Activated CD4-positive, alpha-beta memory T cell treated with anti-CD3 and anti-CD28 coated beads for 36 hours (primary cell): ENCODE measurements at regions of chr3 and their contacts with region 1.

Region 1: DNA sequence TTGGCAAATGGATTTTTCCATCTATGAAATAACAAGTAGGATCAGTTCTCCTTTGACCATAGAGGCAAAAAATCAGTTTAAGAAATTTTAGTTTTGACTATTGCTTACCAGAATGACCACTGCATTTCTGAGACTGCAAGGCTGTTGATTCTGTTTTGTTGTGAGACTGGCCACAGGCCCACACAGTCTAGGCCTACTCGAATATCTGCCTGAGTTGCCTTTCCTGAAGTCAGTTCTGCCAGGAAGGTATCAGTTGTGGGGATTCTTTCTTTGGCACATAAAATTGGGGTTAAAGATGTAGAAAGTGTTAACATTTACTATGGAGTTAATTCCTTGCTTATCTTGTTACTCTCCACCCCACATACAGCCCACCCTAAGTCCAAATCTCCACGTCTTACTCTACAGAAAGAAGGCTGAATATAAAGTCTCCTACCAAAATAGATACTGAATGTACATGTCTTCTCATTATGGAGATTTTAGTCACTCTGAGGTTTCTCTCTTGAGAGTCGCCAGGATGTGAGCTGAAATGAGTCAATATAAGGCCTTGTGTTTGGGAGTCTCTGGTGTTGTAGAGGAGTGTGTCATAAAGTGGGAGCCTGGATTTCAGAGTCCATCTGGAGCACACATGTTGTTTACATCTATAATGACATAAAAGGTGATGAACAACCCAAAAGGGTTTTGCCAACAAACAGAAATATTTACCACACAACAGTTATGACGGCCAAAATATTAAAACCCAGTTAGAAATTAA is 45.0 kb upstream of the WWTR1 start:
- DNase-seq: peak; percentile 28
- H3K4me3 Mint-ChIP-seq: peak overlapping the region; percentile 16
- H3K27ac Mint-ChIP-seq: peak overlapping the region; percentile 81
- H3K4me1 Mint-ChIP-seq: peaks cover 33% of the 10 kb centered on the region
- H3K27me3 Mint-ChIP-seq: no peaks in the 10 kb centered on the region

Region 2: DNA sequence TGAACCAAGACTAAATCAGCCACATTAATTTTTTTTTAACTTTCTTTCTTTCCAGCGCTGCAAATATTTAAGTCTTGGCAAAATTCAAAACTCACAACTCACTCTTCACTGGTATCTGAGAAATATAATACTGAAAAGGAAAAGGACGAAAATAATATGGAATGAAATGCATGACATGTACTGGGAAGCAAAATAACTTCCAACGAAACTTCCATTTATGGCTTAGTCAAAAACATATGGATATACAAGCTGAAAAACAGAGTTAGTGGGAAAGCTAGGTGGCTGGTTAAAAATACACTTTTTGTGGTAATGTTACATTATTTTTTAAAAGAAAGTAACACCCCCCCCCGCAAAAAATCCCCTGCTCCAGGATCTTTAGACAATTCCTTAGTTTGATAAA is 142.2 kb before region 1 on chr3:
- CTCF ChIA-PET with region 1: no interaction called
- POLR2A ChIA-PET with region 1: no interaction called
- intact Hi-C with region 1: no loop called
- DNase-seq: no peak
- H3K4me3 Mint-ChIP-seq: no peak overlapping the region
- H3K27ac Mint-ChIP-seq: no peak overlapping the region
- H3K4me1 Mint-ChIP-seq: no peaks in the 10 kb centered on the region
- H3K27me3 Mint-ChIP-seq: peaks cover 11% of the 10 kb centered on the region

Region 3: GRCh38 chr3:149575961-149576564 is 126.8 kb before region 1 on chr3:
- CTCF ChIA-PET with region 1: no interaction called
- POLR2A ChIA-PET with region 1: no interaction called
- intact Hi-C with region 1: loop called (anchors 1 kb)
- DNase-seq: peak; percentile 43
- H3K4me3 Mint-ChIP-seq: no peak overlapping the region
- H3K27ac Mint-ChIP-seq: no peak overlapping the region
- H3K4me1 Mint-ChIP-seq: peaks cover 38% of the 10 kb centered on the region
- H3K27me3 Mint-ChIP-seq: peaks cover 11% of the 10 kb centered on the region

Region 4: GRCh38 chr3:149621218-149622005 is 81.5 kb before region 1 on chr3:
- CTCF ChIA-PET with region 1: interaction called, 3 read pairs
- POLR2A ChIA-PET with region 1: no interaction called
- intact Hi-C with region 1: loop called (anchors 1 kb)
- DNase-seq: peak; percentile 13
- H3K4me3 Mint-ChIP-seq: no peak overlapping the region
- H3K27ac Mint-ChIP-seq: no peak overlapping the region
- H3K4me1 Mint-ChIP-seq: peaks cover 15% of the 10 kb centered on the region
- H3K27me3 Mint-ChIP-seq: peaks cover 3% of the 10 kb centered on the region

Region 5: GRCh38 chr3:149646181-149646766 is 56.6 kb before region 1 on chr3:
- CTCF ChIA-PET with region 1: no interaction called
- POLR2A ChIA-PET with region 1: no interaction called
- intact Hi-C with region 1: no loop called
- DNase-seq: no peak
- H3K4me3 Mint-ChIP-seq: no peak overlapping the region
- H3K27ac Mint-ChIP-seq: no peak overlapping the region
- H3K4me1 Mint-ChIP-seq: no peaks in the 10 kb centered on the region
- H3K27me3 Mint-ChIP-seq: peaks cover 7% of the 10 kb centered on the region

Region 6: DNA sequence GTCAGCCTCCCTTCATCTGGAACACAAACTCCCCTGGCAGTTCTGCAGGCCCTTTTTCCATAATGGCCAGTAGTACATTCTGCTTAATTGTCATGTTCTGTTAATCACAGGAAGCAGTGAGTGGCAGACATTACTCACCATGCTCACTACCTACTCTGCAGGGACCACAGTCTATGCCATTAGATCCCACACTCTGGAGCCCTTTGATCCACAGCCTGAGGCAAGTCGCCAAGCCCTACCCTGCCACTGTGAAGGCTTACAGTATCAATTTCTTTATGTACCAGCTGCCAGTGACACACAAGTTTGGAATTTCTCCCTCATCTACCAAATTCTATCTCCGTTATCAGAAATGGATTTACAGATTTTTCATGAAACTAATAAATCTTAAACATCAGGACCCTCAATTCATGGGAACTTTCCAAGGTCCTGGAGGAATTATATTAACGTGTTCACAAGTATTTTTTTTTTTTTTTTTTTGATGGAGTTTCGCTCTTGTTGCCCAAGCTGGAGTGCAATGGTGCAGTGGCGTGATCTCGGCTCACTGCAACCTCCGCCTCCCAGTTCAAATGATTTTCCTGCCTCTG is 24.4 kb before region 1 on chr3:
- CTCF ChIA-PET with region 1: no interaction called
- POLR2A ChIA-PET with region 1: no interaction called
- intact Hi-C with region 1: no loop called
- DNase-seq: no peak
- H3K4me3 Mint-ChIP-seq: no peak overlapping the region
- H3K27ac Mint-ChIP-seq: no peak overlapping the region
- H3K4me1 Mint-ChIP-seq: no peaks in the 10 kb centered on the region
- H3K27me3 Mint-ChIP-seq: peaks cover 3% of the 10 kb centered on the region

Region 7: DNA sequence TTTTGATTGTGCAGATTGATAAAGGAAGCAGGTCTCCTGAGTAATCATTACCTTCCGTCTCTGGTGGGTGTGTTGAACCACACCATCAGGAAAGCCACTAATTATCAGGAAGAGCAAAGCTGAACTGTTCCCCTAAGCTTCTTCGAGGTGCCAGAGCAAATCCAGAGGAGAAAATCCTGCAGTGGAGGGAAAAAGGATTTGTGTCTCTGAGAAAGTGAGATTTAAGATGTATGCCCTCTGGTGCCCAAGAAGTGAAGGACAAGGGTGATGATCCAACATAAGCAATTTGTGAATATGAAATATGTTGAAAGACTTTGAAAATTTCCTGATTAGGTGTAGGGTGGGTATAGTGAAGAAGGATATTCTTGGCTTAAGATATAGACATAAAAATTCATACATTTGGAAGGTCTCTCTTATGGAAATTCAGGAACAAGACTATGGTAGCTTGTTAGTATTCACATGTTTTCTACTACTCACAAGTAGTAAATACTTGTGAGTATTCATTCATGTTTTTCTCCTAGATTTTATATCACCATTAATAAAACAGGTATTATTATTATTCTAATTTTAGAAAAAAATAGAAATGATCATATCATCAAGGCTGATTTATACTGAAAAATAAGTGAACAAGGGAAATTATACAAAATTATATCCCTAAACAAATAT is 14.7 kb after region 1 on chr3:
- CTCF ChIA-PET with region 1: interaction called, 6 read pairs
- POLR2A ChIA-PET with region 1: no interaction called
- intact Hi-C with region 1: loop called (anchors 1 kb)
- DNase-seq: peak; percentile 39
- H3K4me3 Mint-ChIP-seq: no peak overlapping the region
- H3K27ac Mint-ChIP-seq: no peak overlapping the region
- H3K4me1 Mint-ChIP-seq: peaks cover 2% of the 10 kb centered on the region
- H3K27me3 Mint-ChIP-seq: peaks cover under 1% of the 10 kb centered on the region

Region 8: DNA sequence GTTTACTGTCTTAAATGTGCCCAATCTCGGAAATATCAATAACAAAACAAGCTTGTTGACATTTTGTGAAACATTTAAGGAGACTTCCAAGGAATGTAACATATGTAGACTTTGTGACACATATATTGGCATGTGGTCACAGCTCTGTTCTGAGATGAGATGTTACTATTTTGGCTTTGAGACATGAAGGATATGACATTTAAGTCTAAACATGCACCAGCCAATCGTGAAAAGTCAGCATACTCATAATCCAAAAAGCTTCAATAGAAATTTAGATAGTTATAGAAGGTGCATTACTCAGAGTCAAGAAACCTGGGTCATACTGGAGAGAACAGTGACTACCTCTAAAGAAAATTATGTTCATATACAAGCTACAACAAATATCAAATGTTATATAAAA is 36.0 kb after region 1 on chr3:
- CTCF ChIA-PET with region 1: no interaction called
- POLR2A ChIA-PET with region 1: no interaction called
- intact Hi-C with region 1: loop called (anchors 1 kb)
- DNase-seq: no peak
- H3K4me3 Mint-ChIP-seq: no peak overlapping the region
- H3K27ac Mint-ChIP-seq: no peak overlapping the region
- H3K4me1 Mint-ChIP-seq: peaks cover 7% of the 10 kb centered on the region
- H3K27me3 Mint-ChIP-seq: no peaks in the 10 kb centered on the region

Region 9: DNA sequence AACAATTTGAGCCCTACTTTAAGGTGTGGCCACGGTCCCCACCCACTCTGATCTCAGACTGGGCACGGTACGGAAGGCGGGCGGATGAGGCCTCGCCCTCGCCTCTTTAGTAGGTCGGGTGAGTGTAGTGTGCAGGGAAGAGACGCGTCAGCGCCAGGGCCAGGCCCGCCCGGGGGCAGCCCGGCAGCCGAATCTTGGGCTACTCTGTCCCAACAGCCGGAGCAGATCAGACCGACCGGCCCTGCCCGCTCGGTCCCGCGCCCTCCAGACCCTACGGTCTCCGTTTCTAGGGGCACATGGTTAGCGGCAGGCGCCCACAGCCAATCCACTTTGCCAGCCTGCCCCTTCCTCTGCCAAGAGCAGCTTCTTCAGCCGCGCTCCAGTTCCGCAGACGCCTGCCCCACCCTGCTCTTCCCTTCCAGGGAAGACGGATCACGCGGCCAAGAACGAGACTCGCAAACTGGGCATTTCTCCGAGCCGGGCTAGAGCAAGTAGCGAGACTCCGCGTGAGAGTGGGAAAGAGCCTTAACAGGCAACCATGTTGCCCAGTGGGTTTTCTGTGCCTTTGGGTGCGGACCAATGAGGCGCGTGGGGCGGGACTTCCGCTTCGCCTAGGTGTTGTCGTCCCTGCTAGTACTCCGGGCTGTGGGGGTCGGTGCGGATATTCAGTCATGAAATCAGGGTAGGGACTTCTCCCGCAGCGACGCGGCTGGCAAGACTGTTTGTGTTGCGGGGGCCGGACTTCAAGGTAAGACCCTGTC is 109.9 kb after region 1 on chr3 and contains the start of gene RNF13:
- CTCF ChIA-PET with region 1: no interaction called
- POLR2A ChIA-PET with region 1: no interaction called
- intact Hi-C with region 1: loop called (anchors 2 kb)
- DNase-seq: peak; percentile 95
- H3K4me3 Mint-ChIP-seq: peak within 1 kb of the TSS; percentile 90
- H3K27ac Mint-ChIP-seq: peak within 1 kb of the TSS; percentile 98
- H3K4me1 Mint-ChIP-seq: peaks cover 41% of the 10 kb centered on the region
- H3K27me3 Mint-ChIP-seq: peaks cover 3% of the 10 kb centered on the region
- total RNA-seq, gene RNF13: 29.4 to 31.5 TPM

Region 10: DNA sequence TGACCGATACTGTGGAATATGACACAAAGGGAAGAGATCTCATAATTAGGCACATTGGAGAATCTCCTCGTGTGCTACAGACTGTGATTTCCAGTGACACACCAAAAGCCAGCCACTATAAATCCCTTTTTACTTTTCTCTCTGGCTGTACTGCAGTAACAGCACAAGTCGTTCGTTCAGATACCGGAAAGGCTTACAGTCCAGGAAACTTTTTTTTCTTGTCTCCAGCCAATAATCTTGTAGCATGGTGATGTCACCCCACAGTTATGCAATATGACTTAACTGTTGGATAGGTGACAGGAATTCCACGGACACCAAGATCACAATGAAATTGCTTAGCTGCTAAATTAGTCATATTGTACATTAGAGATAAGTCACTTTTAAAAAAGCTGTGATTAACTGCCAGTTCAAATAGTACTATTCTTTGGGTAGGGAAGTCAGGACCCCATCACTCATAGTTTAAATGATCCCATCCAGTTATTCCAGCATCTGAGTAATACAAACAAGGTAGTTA is 668.9 kb after region 1 on chr3:
- CTCF ChIA-PET with region 1: no interaction called
- POLR2A ChIA-PET with region 1: no interaction called
- intact Hi-C with region 1: no loop called
- DNase-seq: no peak
- H3K4me3 Mint-ChIP-seq: no peak overlapping the region
- H3K27ac Mint-ChIP-seq: no peak overlapping the region
- H3K4me1 Mint-ChIP-seq: peaks cover 4% of the 10 kb centered on the region
- H3K27me3 Mint-ChIP-seq: no peaks in the 10 kb centered on the region